ENCODE measurements at regions of chr6 and their contacts with region 1.

Region 1: DNA sequence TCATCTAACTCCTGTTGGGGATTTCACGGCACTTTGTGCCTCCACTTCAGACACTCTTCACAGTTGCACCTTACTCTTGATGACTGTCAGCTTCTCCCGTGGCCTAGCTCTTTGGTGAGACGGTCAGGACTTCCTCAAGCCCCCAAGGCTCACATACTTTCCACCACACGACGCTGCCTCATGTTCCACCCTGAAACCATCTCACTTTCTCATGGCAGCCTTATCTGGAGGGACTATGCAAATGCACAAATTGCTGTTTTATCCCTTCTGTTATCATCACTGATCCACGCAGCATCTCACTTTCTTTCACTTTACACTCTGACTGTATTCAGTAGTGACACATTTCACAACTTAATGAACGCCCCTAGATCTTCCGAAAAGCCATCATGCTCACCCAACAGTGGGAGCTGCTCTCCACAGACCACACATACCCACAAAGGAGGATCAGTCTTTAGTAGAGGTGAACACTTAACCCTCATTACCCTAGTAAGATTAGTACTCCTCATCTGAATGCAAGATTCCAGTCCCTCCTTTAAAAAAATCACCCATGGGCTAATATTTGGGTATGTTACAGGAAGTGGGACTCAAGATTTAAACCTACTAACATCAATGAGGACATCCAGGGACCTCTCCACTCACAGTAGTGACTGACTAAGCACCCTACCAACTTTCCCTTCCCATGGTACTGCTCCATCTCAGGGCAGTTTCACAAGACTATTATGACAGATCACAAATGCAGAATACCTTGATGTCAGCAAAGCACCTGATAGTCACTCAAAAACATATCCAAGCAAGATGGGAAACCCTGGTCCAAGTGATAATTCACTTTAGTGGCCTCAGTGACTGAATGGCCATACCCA is 35.4 kb downstream of the FYN start:
- DNase-seq: peak; percentile 77
- H3K4me3 Mint-ChIP-seq: peak overlapping the region; percentile 54
- H3K27ac Mint-ChIP-seq: peak overlapping the region; percentile 91
- H3K4me1 Mint-ChIP-seq: peaks cover 37% of the 10 kb centered on the region
- H3K27me3 Mint-ChIP-seq: no peaks in the 10 kb centered on the region

Region 2: DNA sequence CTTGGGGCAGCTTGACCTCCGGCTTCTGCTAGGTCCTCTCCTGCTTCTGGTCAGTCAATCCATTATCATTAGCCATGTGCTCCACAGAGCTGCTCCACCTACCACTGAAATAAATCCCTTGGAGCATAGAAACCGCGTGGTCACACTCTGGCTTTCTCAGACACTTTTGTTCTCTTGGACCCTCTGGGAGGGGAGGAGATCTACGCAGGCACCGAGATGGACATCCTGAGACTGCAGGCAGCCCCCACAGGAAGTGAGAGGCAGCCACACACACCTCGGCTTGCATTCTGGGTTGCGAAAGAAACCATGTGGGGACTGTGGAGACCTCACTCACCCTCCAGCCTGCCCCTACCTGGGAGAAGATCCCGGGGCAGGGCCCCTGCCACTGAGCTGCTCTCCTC is 44.2 kb before region 1 on chr6:
- CTCF ChIA-PET with region 1: no interaction called
- POLR2A ChIA-PET with region 1: no interaction called
- intact Hi-C with region 1: loop called (anchors 1 kb)
- DNase-seq: peak; percentile 75
- H3K4me3 Mint-ChIP-seq: peak overlapping the region; percentile 78
- H3K27ac Mint-ChIP-seq: peak overlapping the region; percentile 93
- H3K4me1 Mint-ChIP-seq: peaks cover 77% of the 10 kb centered on the region
- H3K27me3 Mint-ChIP-seq: no peaks in the 10 kb centered on the region

Region 3: GRCh38 chr6:111812060-111813038 is 25.5 kb before region 1 on chr6:
- CTCF ChIA-PET with region 1: interaction called, 3 read pairs
- POLR2A ChIA-PET with region 1: interaction called, 4 read pairs
- intact Hi-C with region 1: loop called (anchors 1 kb)
- DNase-seq: peak; percentile 15
- H3K4me3 Mint-ChIP-seq: no peak overlapping the region
- H3K27ac Mint-ChIP-seq: peak overlapping the region; percentile 89
- H3K4me1 Mint-ChIP-seq: peaks cover 84% of the 10 kb centered on the region
- H3K27me3 Mint-ChIP-seq: no peaks in the 10 kb centered on the region

Region 4: GRCh38 chr6:111861431-111861885 is 23.6 kb after region 1 on chr6:
- CTCF ChIA-PET with region 1: interaction called, 6 read pairs
- POLR2A ChIA-PET with region 1: interaction called, 5 read pairs
- intact Hi-C with region 1: loop called (anchors 1 kb)
- DNase-seq: peak; percentile 48
- H3K4me3 Mint-ChIP-seq: peak overlapping the region; percentile 2
- H3K27ac Mint-ChIP-seq: peak overlapping the region; percentile 52
- H3K4me1 Mint-ChIP-seq: peaks cover 100% of the 10 kb centered on the region
- H3K27me3 Mint-ChIP-seq: no peaks in the 10 kb centered on the region

Region 5: GRCh38 chr6:111957623-111958315 is 119.9 kb after region 1 on chr6:
- CTCF ChIA-PET with region 1: no interaction called
- POLR2A ChIA-PET with region 1: no interaction called
- intact Hi-C with region 1: no loop called
- DNase-seq: no peak
- H3K4me3 Mint-ChIP-seq: no peak overlapping the region
- H3K27ac Mint-ChIP-seq: no peak overlapping the region
- H3K4me1 Mint-ChIP-seq: peaks cover 5% of the 10 kb centered on the region
- H3K27me3 Mint-ChIP-seq: no peaks in the 10 kb centered on the region

Region 6: GRCh38 chr6:111997078-111997852 is 159.4 kb after region 1 on chr6:
- CTCF ChIA-PET with region 1: no interaction called
- POLR2A ChIA-PET with region 1: interaction called, 3 read pairs
- intact Hi-C with region 1: loop called (anchors 1 kb)
- DNase-seq: peak; percentile 87
- H3K4me3 Mint-ChIP-seq: peak overlapping the region; percentile 48
- H3K27ac Mint-ChIP-seq: peak overlapping the region; percentile 28
- H3K4me1 Mint-ChIP-seq: peaks cover 48% of the 10 kb centered on the region
- H3K27me3 Mint-ChIP-seq: no peaks in the 10 kb centered on the region